ENCODE measurements at regions of chr5 and their contacts with region 1.

Region 1: DNA sequence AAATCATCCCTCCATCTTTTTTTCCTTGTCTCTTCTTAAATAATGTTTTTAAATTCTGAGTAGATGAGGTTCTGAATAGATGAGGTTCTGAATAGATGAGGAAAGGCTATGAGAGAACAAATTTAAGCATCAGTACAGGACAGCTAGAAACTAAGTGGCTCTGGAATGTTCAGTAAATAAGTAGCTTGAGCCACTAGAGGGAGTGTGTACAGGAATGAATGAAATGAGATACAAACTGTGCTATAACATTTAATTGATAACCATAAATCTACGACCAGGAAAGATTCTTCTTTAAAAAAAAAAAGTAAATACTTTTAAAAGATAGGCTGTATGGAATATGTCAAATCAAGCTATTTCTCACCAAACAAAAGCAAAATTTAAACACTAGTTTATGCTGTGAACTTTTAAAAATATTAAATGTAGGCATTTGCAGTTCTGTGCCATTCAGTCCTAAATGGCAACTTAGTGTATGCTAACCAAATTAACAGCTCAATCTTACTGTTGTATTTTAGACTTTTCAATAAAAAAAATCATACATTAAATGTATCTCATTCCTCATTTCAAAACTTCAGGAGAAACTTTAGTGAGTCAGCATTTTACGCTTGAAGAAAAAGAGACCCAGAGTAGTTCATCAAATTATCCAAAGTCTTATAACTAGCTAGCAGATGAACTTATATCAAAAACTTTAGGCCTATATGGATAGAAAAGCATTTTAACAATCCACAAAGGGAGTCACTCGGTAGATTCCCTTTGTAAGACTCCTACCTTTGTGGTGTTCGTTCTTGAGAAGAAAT is 70.4 kb upstream of the SNX2 start:
- DNase-seq: peak; percentile 43
- ATAC-seq: peak; percentile 85
- H3K4me3 ChIP-seq: no peak overlapping the region
- H3K27ac ChIP-seq: no peak overlapping the region
- H3K4me1 ChIP-seq: no peaks in the 10 kb centered on the region
- H3K27me3 ChIP-seq: no peaks in the 10 kb centered on the region
- CTCF ChIP-seq: peak; percentile 30 to 70 (median 53); a peak in 5 of 6 replicates
- POLR2A ChIP-seq: no peak
- RAD21 ChIP-seq: peak; percentile 52

Region 2: DNA sequence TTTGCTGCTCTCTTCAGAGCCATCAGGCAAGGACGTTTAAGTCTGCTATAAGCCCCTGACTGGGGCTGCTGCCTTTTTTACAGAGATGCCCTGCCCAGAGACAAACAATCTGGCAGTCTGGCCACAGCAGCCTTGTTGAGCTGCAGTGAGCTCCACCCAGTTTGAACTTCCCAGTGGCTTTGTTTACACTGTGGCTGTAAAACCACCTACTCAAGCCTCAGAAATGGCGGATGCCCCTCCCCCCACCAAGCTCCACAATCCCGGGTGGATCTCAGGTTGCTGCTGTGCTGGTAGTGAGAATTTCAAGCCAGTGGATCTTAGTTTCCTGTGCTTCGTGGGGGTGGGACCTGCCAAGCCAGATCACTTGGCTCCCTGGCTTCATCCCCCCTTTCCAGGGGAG is 452.1 kb before region 1 on chr5:
- CTCF ChIA-PET with region 1: no interaction called
- POLR2A ChIA-PET with region 1: no interaction called
- RAD21 ChIA-PET with region 1: no interaction called
- intact Hi-C with region 1: no loop called
- DNase-seq: no peak
- ATAC-seq: no peak
- H3K4me3 ChIP-seq: no peak overlapping the region
- H3K27ac ChIP-seq: no peak overlapping the region
- H3K4me1 ChIP-seq: no peaks in the 10 kb centered on the region
- H3K27me3 ChIP-seq: no peaks in the 10 kb centered on the region
- CTCF ChIP-seq: no peak
- POLR2A ChIP-seq: no peak
- RAD21 ChIP-seq: no peak

Region 3: DNA sequence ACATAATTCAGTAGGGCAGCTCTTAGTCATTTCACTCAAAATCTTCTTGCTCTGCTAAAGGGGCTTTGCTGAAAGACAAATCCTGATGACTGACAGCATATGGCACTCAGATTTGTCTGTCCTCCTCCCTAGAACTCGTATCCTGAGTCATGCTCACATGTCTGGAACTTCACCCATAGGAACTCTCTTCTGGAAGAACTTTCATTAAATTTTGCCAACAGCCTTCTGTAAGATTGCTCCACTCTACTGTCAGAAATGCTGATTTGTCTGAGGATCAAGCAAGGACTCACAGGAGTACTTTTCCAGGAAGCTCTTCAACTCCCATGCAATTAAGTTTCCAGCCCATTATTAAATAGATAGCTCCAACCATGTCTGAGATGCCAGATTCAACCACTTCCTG is 10.7 kb after region 1 on chr5:
- CTCF ChIA-PET with region 1: interaction called, 15 read pairs
- POLR2A ChIA-PET with region 1: no interaction called
- RAD21 ChIA-PET with region 1: no interaction called
- intact Hi-C with region 1: no loop called
- DNase-seq: no peak
- ATAC-seq: no peak
- H3K4me3 ChIP-seq: no peak overlapping the region
- H3K27ac ChIP-seq: no peak overlapping the region
- H3K4me1 ChIP-seq: no peaks in the 10 kb centered on the region
- H3K27me3 ChIP-seq: no peaks in the 10 kb centered on the region
- CTCF ChIP-seq: no peak
- POLR2A ChIP-seq: no peak
- RAD21 ChIP-seq: no peak

Region 4: GRCh38 chr5:122882837-122883236 is 178.4 kb after region 1 on chr5:
- CTCF ChIA-PET with region 1: no interaction called
- POLR2A ChIA-PET with region 1: no interaction called
- RAD21 ChIA-PET with region 1: no interaction called
- intact Hi-C with region 1: loop called (anchors 10 kb)
- DNase-seq: no peak
- ATAC-seq: no peak
- H3K4me3 ChIP-seq: no peak overlapping the region
- H3K27ac ChIP-seq: no peak overlapping the region
- H3K4me1 ChIP-seq: no peaks in the 10 kb centered on the region
- H3K27me3 ChIP-seq: no peaks in the 10 kb centered on the region
- CTCF ChIP-seq: no peak
- POLR2A ChIP-seq: no peak
- RAD21 ChIP-seq: no peak

Region 5: GRCh38 chr5:122999945-123000563 is 295.6 kb after region 1 on chr5:
- CTCF ChIA-PET with region 1: interaction called, 4 read pairs
- POLR2A ChIA-PET with region 1: no interaction called
- RAD21 ChIA-PET with region 1: no interaction called
- intact Hi-C with region 1: loop called (anchors 5 kb)
- DNase-seq: peak; percentile 36
- ATAC-seq: peak; percentile 87
- H3K4me3 ChIP-seq: no peak overlapping the region
- H3K27ac ChIP-seq: no peak overlapping the region
- H3K4me1 ChIP-seq: no peaks in the 10 kb centered on the region
- H3K27me3 ChIP-seq: no peaks in the 10 kb centered on the region
- CTCF ChIP-seq: peak; percentile 54 to 77 (median 73); a peak in 5 of 6 replicates
- POLR2A ChIP-seq: no peak
- RAD21 ChIP-seq: peak; percentile 78

Measured in HCT116 (cell line).